ENCODE measurements at regions of chr1 and their contacts with region 1.

Region 1: DNA sequence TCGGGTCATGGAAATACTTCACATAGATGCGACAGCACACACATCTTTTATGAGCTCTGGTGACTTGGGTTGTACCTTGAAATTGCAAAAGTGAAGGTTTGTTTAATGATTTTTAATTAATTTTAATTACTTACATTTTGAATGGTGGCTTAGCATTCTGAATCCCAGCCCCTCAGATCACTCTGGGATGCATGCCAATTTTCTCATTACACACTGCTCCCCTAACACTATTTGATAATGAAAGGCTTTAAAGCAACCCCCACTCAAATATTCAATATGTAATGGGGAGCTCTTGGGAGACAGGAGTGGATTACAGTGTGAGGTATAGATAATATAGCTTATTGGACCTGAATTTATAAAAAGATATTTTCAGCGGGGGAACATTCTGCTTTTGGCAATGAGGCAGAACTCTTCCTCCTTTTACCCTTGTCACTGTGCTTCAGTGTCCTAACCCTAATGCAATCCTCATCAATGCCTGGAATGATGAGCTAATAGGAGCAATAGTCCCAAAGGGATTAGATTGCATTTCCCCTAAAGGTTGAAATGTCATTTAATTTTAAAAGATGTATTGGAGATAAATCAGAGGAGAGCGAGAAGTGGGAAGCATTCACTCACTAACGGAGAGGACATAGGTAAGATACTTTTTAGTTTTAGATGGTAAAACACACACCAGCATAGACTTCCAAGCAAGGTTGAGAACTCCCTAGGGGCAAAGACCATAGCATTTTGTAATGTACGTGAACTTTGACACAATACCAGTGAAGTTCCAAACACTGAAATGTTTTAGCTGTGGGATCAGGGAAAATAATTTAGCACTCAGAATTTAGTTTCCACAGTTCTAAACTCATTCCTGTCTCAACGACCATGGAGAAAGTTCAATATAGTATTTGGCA is 384.1 kb upstream of the PLXNA2 start:
- DNase-seq: no peak

Region 2: GRCh38 chr1:208665936-208666335 is 37.7 kb after region 1 on chr1:
- intact Hi-C with region 1: loop called in 1 of 2 experiments (anchors 1 kb)
- DNase-seq: no peak

Region 3: GRCh38 chr1:210272666-210273065 is 1644.4 kb after region 1 on chr1:
- intact Hi-C with region 1: loop called in 1 of 2 experiments (anchors 10 kb)
- DNase-seq: no peak

Measured in posterior vena cava (tissue), 2 donors.